Gastrocnemius medialis (tissue), 4 donors: ENCODE measurements at regions of chr11 and their contacts with region 1.

Region 1: GRCh38 chr11:14519917-14520746 is at the start of gene PSMA1:
- DNase-seq: peak; percentile 92 to 94
- ATAC-seq: peak; percentile 97 to 98
- H3K4me3 ChIP-seq: peak within 1 kb of the TSS; percentile 67 to 87 (median 82)
- H3K27ac ChIP-seq: peak within 1 kb of the TSS; percentile 88 to 94 (median 90)
- H3K4me1 ChIP-seq: peaks cover 21 to 25% of the 10 kb centered on the region in 2 donors
- H3K27me3 ChIP-seq: no peaks in the 10 kb centered on the region
- CTCF ChIP-seq: peak; percentile 62 to 80 (median 70)
- POLR2A ChIP-seq: peak; percentile 89
- total RNA-seq, gene PSMA1: 202 to 215 (median 206) TPM

Region 2: GRCh38 chr11:14358729-14359439 is 161.2 kb before region 1 on chr11 and contains the start of gene RRAS2:
- in situ Hi-C with region 1: no loop called
- intact Hi-C with region 1: loop called (anchors 5 kb)
- DNase-seq: peak; percentile 63 to 77
- ATAC-seq: peak; percentile 74 to 77
- H3K4me3 ChIP-seq: peak within 1 kb of the TSS; percentile 72 to 91 (median 78)
- H3K27ac ChIP-seq: peak within 1 kb of the TSS; percentile 79 to 95 (median 80)
- H3K4me1 ChIP-seq: peaks cover 31 to 33% of the 10 kb centered on the region in 2 donors
- H3K27me3 ChIP-seq: no peaks in the 10 kb centered on the region
- CTCF ChIP-seq: peak in 2 of 5 experiments; percentile 15 to 16
- POLR2A ChIP-seq: peak; percentile 94
- total RNA-seq, gene RRAS2: 52.8 to 81.9 (median 59.8) TPM

Region 3: DNA sequence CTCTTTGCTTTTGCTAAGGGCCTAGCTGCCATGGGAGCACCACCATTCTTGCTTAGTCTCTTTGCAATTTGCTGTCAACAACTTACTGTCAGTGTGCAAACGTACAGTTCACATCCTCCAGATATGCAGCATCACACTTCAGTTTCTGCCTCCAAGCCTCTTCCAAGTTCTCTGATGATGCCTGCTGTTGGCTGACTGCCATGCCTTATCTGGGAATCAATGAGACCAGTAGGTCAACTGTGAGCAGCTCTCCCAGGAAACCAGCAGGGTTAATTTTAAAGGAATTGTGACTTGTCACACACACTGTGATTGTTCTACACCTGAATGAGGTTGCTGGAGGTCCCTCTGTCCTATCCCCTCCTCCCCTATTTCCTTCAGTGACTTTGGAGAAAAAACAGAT is 76.5 kb before region 1 on chr11:
- in situ Hi-C with region 1: no loop called
- intact Hi-C with region 1: no loop called
- DNase-seq: no peak
- ATAC-seq: no peak
- H3K4me3 ChIP-seq: no peak overlapping the region
- H3K27ac ChIP-seq: no peak overlapping the region
- H3K4me1 ChIP-seq: no peaks in the 10 kb centered on the region
- H3K27me3 ChIP-seq: no peaks in the 10 kb centered on the region
- CTCF ChIP-seq: no peak
- POLR2A ChIP-seq: no peak

Region 4: DNA sequence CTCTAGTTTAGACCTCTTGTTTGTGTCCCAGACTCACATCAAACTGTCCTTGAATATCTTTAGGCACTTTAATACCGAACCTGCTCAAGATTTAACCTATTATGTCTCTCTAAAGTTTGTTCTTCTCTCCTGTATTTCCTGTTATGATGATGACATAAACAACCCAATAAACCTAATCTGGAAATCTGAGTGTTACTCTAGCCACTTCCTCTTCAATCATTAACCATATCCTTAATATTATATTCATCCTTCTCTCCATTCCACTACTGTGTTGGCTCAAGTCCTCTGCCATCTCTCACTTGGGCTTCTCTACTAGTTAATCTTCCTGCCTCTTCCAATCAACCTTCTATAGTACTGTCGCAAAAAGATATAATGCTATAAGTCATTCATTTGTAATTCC is 56.5 kb before region 1 on chr11:
- in situ Hi-C with region 1: loop called in 1 of 4 experiments (anchors 10 kb)
- intact Hi-C with region 1: no loop called
- DNase-seq: no peak
- ATAC-seq: no peak
- H3K4me3 ChIP-seq: no peak overlapping the region
- H3K27ac ChIP-seq: no peak overlapping the region
- H3K4me1 ChIP-seq: no peaks in the 10 kb centered on the region
- H3K27me3 ChIP-seq: no peaks in the 10 kb centered on the region
- CTCF ChIP-seq: no peak
- POLR2A ChIP-seq: no peak

Region 5: GRCh38 chr11:14499554-14500180 is 20.5 kb before region 1 on chr11 and contains the start of gene COPB1:
- in situ Hi-C with region 1: no loop called
- intact Hi-C with region 1: loop called (anchors 1 kb)
- DNase-seq: peak; percentile 88 to 89
- ATAC-seq: peak; percentile 95 to 98
- H3K4me3 ChIP-seq: peak within 1 kb of the TSS; percentile 72 to 96 (median 84)
- H3K27ac ChIP-seq: peak within 1 kb of the TSS; percentile 88 to 94 (median 92)
- H3K4me1 ChIP-seq: peaks cover 19 to 37% of the 10 kb centered on the region in 2 donors
- H3K27me3 ChIP-seq: no peaks in the 10 kb centered on the region
- CTCF ChIP-seq: no peak
- POLR2A ChIP-seq: peak; percentile 71 to 74
- total RNA-seq, gene COPB1: 46.4 to 59.1 (median 52.4) TPM

Region 6: GRCh38 chr11:14892036-14892567 is 372.0 kb after region 1 on chr11 and contains the start of gene CYP2R1:
- in situ Hi-C with region 1: loop called (anchors 10 to 25 kb)
- intact Hi-C with region 1: loop called (anchors 1 kb)
- DNase-seq: peak; percentile 92 to 96
- ATAC-seq: peak; percentile 95 to 96
- H3K4me3 ChIP-seq: peak within 1 kb of the TSS; percentile 75 to 97 (median 87)
- H3K27ac ChIP-seq: peak within 1 kb of the TSS; percentile 87 to 94 (median 89)
- H3K4me1 ChIP-seq: peaks cover 9 to 21% of the 10 kb centered on the region in 2 donors
- H3K27me3 ChIP-seq: no peaks in the 10 kb centered on the region
- CTCF ChIP-seq: no peak
- POLR2A ChIP-seq: peak in 1 of 2 donors; percentile 20
- total RNA-seq, gene CYP2R1: 4.6 to 9.2 (median 4.8) TPM